Activated CD4-positive, alpha-beta T cell treated with anti-CD3 and anti-CD28 coated beads for 36 hours (primary cell): ENCODE measurements at regions of chr1 and their contacts with region 1.

Region 1: DNA sequence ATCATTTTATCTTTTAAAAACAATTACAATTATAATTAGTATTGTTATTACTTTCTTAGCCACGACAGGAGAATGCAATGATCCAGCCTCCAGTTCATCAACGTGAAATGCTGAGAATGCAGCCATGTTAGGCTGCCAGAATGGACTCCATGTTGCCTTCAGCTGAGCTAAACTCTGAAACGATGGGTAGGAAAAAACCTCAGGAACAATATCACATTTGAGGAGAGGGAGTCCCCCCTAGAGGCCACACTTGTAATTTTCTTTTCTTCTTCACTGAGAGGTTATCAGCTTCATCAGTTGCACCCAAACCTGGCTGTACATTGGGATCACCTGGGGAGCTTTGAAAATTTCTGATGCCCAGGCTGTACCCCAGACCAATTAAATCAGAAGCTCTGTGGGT is 34.6 kb upstream of the DNAH14 start:
- DNase-seq: no peak
- ATAC-seq: no peak
- H3K4me3 Mint-ChIP-seq: no peak overlapping the region
- H3K27ac Mint-ChIP-seq: no peak overlapping the region
- H3K4me1 Mint-ChIP-seq: no peaks in the 10 kb centered on the region
- H3K27me3 Mint-ChIP-seq: peaks cover 7% of the 10 kb centered on the region

Region 2: DNA sequence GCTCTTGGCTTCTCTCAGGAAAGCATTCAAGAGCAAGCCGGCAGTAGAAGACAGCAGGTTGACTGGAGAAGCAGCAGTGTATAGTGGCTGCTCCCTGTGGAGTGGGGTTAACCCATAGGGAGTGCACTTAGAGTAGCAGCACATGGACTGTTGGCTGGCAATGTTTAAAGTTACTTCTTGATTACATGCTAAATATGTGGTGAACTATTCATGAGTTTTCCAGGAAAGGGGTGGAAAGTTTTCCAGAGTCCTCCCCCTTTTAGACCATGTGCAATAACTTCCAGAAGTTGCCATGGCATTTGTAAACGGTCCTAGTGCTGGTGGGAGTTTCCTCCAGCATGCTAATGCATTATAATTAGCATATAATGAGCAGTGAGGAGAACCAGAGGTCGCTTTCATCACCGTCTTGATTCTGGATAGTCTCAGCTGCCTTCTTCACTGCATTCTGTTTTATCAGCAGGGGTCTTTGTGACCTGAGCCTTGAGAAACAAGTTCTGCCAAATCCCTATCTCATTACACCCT is 1369.9 kb before region 1 on chr1:
- CTCF ChIA-PET with region 1: no interaction called
- POLR2A ChIA-PET with region 1: no interaction called
- intact Hi-C with region 1: loop called in 1 of 2 experiments (anchors 5 kb)
- DNase-seq: no peak
- ATAC-seq: no peak
- H3K4me3 Mint-ChIP-seq: no peak overlapping the region
- H3K27ac Mint-ChIP-seq: no peak overlapping the region
- H3K4me1 Mint-ChIP-seq: peaks cover 7% of the 10 kb centered on the region
- H3K27me3 Mint-ChIP-seq: no peaks in the 10 kb centered on the region

Region 3: DNA sequence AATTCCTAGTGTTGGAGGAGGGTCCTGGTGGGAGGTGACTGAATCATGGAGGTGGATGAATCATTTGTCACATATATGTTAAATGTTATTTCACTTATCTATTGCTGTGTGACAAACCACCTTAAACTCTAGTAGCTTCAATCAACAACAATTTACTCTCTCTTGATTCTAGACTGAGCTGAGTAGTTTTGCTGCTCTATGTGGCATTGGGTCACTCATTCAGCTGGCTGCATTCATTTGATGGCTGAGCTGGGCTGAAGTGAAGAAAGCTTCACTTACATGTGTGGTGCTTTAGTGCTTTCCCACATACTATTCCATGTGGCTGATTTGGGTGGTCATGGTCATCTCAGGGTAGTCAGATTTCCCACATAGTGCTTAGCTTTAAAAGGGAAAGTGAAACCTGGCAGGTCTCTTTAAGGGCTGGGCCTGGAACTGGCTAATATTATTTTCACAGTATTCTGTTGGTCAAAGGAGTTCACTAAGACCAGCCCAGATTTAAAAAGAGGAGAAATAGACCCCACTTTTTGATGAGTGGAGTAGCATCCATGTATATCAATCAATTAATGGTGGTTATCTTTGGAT is 45.0 kb after region 1 on chr1:
- CTCF ChIA-PET with region 1: no interaction called
- POLR2A ChIA-PET with region 1: no interaction called
- intact Hi-C with region 1: no loop called
- DNase-seq: no peak
- ATAC-seq: no peak
- H3K4me3 Mint-ChIP-seq: no peak overlapping the region
- H3K27ac Mint-ChIP-seq: no peak overlapping the region
- H3K4me1 Mint-ChIP-seq: no peaks in the 10 kb centered on the region
- H3K27me3 Mint-ChIP-seq: peaks cover 2% of the 10 kb centered on the region